Activated B cell treated with CpG ODN at 0.5 μM for 24 hours (primary cell): ENCODE measurements at regions of chr15 and their contacts with region 1.

Region 1: GRCh38 chr15:74438721-74439316 is 5.1 kb upstream of the SEMA7A start:
- DNase-seq: peak; percentile 67
- ATAC-seq: peak; percentile 53
- H3K4me3 Mint-ChIP-seq: peak overlapping the region; percentile 28
- H3K27ac Mint-ChIP-seq: peak overlapping the region; percentile 73
- H3K4me1 Mint-ChIP-seq: peaks cover 40% of the 10 kb centered on the region
- H3K27me3 Mint-ChIP-seq: no peaks in the 10 kb centered on the region
- CTCF ChIP-seq: peak; percentile 54

Region 2: DNA sequence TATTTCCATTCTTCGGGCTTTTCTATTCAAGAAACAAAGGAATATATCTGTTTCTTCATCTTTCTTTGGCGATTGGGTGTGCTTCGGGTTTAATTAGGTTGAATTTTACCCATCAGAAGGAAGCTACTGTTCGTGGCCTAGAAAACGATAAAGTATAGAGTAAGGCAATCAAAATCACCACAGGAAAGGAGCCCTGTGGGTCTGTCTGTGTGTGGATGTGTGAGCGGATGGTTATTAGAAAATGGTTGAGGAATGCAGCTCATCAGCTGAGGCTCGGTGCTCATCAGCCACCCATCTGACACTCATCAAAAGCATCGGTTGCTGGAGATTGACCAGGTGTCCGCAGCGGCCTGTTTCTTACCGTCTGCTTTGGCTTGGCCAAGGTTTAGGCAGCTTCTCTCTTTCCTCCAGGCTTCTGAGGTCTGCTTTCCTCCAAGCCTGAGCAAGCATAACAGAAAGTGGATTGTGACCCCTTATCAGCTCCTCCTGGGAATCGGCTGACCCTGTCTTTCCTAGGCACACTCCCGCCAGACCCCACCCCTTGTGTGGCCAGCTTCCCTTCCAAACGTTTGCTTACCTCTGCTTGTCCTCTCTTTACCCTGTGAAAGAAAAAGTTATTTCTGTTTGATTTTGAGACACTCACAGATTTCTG is 282.9 kb before region 1 on chr15:
- CTCF ChIA-PET with region 1: no interaction called
- POLR2A ChIA-PET with region 1: no interaction called
- intact Hi-C with region 1: no loop called
- DNase-seq: no peak
- ATAC-seq: no peak
- H3K4me3 Mint-ChIP-seq: no peak overlapping the region
- H3K27ac Mint-ChIP-seq: no peak overlapping the region
- H3K4me1 Mint-ChIP-seq: peaks cover 7% of the 10 kb centered on the region
- H3K27me3 Mint-ChIP-seq: peaks cover 35% of the 10 kb centered on the region
- CTCF ChIP-seq: no peak

Region 3: DNA sequence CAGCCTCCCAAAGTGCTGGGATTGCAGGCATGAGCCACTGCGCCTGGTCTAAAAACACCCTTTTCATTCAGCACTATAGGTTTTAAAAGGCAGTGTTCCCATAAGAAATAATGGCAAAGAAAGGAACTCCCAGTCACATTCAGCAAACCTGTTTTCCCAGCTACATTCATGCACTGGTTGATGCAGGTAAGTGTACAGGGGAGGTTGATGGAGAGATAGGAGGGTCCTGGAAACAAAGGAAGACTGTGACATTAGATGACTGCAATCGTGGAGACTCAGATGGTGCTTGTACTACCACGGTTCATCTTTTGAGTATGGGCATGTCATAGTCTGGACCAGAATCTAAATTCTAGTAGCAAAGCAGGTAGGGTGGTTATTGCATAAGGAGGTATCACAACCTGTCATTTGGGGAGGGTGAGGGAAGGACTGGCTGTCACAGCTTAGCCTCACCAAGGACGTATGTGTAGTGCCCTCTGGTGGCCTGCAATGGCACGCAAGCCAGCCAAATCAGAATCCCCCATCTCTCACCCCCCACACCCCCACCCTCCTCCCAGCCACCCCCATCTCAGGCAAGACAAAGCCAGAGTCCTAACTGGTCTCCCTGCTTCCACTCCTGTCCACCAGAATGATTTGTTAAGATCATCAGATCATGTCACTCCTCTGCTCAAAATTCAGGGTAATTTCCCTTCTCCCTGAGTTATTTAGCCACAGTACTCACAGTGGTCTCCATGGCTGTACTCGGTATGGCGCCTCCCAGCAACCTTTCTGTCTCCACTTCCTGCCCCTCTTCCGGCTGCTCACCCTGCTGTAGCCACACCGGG is 50.9 kb after region 1 on chr15:
- CTCF ChIA-PET with region 1: no interaction called
- POLR2A ChIA-PET with region 1: no interaction called
- intact Hi-C with region 1: loop called (anchors 1 kb)
- DNase-seq: peak; percentile 60
- ATAC-seq: peak; percentile 96
- H3K4me3 Mint-ChIP-seq: peak overlapping the region; percentile 51
- H3K27ac Mint-ChIP-seq: peak overlapping the region; percentile 8
- H3K4me1 Mint-ChIP-seq: peaks cover 11% of the 10 kb centered on the region
- H3K27me3 Mint-ChIP-seq: no peaks in the 10 kb centered on the region
- CTCF ChIP-seq: peak; percentile 25